Motor neuron (in vitro differentiated cells): ENCODE measurements at regions of chr19 and their contacts with region 1.

Region 1: DNA sequence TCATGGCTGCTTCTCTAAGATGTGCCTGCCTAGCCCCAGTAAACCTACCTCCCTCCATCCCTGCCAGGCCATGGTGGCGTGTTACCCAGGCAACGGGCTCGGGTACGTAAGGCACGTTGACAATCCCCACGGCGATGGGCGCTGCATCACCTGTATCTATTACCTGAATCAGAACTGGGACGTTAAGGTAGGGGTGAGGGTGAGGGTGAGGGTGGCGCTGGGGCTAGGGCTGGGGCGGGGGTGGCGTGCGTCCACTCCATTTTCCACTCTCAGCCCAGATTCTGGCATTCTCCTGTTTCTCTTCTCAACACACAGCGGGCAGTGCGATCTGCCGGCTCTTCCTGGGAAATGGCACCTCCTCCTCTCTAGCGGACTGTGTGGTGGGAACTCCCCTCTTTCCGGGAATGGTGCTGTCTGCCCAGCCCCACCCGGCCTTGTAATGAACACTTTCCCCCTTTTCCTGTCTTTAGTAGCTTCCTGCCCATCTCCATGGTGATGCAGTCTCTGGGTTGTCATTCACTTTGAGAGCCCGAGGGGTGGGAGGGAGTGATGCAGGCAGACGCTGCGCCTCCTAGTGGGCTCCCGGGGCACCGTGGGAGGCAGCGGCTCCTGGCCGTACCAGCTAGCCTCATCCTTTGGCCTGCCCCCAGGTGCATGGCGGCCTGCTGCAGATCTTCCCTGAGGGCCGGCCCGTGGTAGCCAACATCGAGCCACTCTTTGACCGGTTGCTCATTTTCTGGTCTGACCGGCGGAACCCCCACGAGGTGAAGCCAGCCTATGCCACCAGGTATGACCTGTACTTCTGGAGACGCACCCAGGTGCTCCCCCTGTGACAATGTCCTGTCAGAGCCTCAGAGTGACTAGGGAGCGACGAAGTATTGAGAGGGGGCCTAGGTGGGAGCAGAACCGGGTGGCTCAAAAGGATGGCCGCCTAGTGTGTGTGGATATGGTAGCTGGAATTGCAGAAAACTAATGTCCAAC is 7.8 kb downstream of the EGLN2 start:
- ATAC-seq: peak; percentile 58 to 84 (median 80)
- H3K4me3 ChIP-seq: peak overlapping the region; percentile 7 to 17 (median 15)
- H3K27ac ChIP-seq: peak overlapping the region; percentile 56 to 63
- H3K4me1 ChIP-seq: peaks cover 54 to 56% of the 10 kb centered on the region in 2 donors

Region 2: GRCh38 chr19:40662921-40663694 is 143.7 kb before region 1 on chr19:
- in situ Hi-C with region 1: loop called in 5 of 9 experiments (anchors 25 kb)
- ATAC-seq: peak; percentile 70 to 96 (median 92)
- H3K4me3 ChIP-seq: peak overlapping the region; percentile 41 to 73 (median 55)
- H3K27ac ChIP-seq: peak overlapping the region; percentile 16 to 70
- H3K4me1 ChIP-seq: peaks cover 4 to 7% of the 10 kb centered on the region in 2 donors

Region 3: GRCh38 chr19:40756502-40757110 is 50.2 kb before region 1 on chr19:
- in situ Hi-C with region 1: no loop called
- ATAC-seq: no peak
- H3K4me3 ChIP-seq: no peak overlapping the region
- H3K27ac ChIP-seq: no peak overlapping the region
- H3K4me1 ChIP-seq: peaks cover 0 to 4% of the 10 kb centered on the region in 2 donors